Mammary epithelial cell (primary cell): ENCODE measurements at regions of chr9 and their contacts with region 1.

Region 1: GRCh38 chr9:107698779-107699178 is 209.2 kb upstream of the KLF4 start:
- DNase-seq: no peak
- H3K4me3 ChIP-seq: no peak overlapping the region
- H3K27ac ChIP-seq: no peak overlapping the region
- H3K4me1 ChIP-seq: no peaks in the 10 kb centered on the region
- H3K27me3 ChIP-seq: no peaks in the 10 kb centered on the region
- CTCF ChIP-seq: no peak

Region 2: GRCh38 chr9:107624234-107624960 is 74.4 kb before region 1 on chr9:
- CTCF ChIA-PET with region 1: no interaction called
- dilution Hi-C with region 1: loop called (anchors 5 kb)
- in situ Hi-C with region 1: no loop called
- intact Hi-C with region 1: no loop called
- DNase-seq: peak; percentile 16
- H3K4me3 ChIP-seq: no peak overlapping the region
- H3K27ac ChIP-seq: no peak overlapping the region
- H3K4me1 ChIP-seq: no peaks in the 10 kb centered on the region
- H3K27me3 ChIP-seq: peaks cover 3% of the 10 kb centered on the region
- CTCF ChIP-seq: no peak

Region 3: GRCh38 chr9:107784231-107784958 is 85.6 kb after region 1 on chr9:
- CTCF ChIA-PET with region 1: no interaction called
- dilution Hi-C with region 1: loop called (anchors 5 kb)
- in situ Hi-C with region 1: no loop called
- intact Hi-C with region 1: no loop called
- DNase-seq: peak; percentile 5
- H3K4me3 ChIP-seq: no peak overlapping the region
- H3K27ac ChIP-seq: no peak overlapping the region
- H3K4me1 ChIP-seq: no peaks in the 10 kb centered on the region
- H3K27me3 ChIP-seq: no peaks in the 10 kb centered on the region
- CTCF ChIP-seq: no peak